Head of caudate nucleus (tissue), 42 donors: ENCODE measurements at regions of chr18 and their contacts with region 1.

Region 1: DNA sequence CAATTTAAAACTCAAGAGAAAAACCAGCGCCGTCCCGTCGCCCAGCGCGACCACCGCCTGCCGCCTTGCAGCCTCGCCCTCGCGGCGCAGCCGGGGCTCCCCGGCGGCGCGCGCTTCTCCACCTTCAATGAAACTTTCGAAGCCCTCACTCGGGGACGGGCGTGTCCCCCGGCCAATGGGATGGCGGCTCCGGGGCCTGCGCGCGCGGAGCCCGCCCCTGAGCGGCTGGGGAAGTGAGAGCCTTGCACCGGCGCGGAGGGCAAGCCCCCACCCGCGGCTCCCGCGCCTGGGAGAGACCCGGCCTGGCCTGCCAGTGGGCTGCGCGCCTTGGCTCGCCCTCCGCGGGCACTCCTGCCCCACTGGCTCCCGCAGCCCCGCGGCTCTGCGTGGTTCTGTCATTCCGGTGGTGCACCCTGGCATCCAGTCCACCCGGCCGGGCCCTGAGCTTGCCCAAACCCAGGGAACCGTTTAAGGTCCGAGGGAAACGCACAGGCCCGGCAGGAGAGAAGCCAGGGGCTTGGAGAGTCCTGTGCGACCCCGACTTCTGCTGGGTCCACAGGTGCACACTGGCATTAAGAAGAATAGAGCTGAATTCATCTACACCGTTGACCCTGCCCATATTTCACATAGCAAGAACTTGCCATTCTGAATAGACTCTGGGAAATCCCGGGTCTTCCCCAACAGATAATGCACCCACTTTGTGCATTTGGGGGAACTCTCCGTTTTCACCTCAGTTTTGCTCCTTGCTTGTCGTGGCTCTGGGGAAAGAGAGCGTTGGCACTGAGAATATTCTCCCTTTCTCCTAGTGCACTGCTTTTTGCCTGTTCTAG is at the start of gene PIEZO2:
- DNase-seq: peak; percentile 49 to 92 (median 83)

Region 2: GRCh38 chr18:10851824-10852319 is 297.8 kb before region 1 on chr18:
- intact Hi-C with region 1: loop called (anchors 10 kb)
- DNase-seq: peak in 2 of 42 donors; percentile 16 to 36

Region 3: GRCh38 chr18:11009147-11009546 is 140.5 kb before region 1 on chr18:
- intact Hi-C with region 1: no loop called
- DNase-seq: no peak

Region 4: GRCh38 chr18:11040823-11041656 is 108.6 kb before region 1 on chr18:
- intact Hi-C with region 1: loop called (anchors 5 kb)
- DNase-seq: peak in 35 of 42 donors; percentile 12 to 91 (median 64)

Region 5: DNA sequence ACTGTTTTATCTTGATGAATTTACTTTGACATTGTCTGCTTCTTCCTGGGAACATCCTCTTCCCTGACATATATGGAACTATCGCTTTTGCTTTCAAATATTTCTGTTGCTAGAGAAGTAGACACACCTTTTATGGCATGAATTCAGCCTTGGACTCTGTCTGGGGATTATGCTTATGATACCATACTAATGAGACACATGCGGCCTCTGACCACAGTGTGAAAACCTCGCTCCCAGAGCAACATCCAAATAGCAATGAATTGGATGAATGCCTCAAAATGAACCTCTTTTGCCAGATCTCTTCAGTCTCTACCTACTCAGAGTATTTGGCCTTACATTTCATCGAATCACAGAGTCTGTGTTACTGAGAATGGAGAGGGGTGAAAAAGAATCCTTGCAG is 71.2 kb before region 1 on chr18:
- intact Hi-C with region 1: no loop called
- DNase-seq: no peak